ENCODE measurements at regions of chr16 and their contacts with region 1.

Region 1: GRCh38 chr16:70416748-70417616 is 21.9 kb downstream of the ST3GAL2 start:
- DNase-seq: no peak
- H3K4me3 Mint-ChIP-seq: no peak overlapping the region
- H3K27ac Mint-ChIP-seq: no peak overlapping the region
- H3K4me1 Mint-ChIP-seq: no peaks in the 10 kb centered on the region
- H3K27me3 Mint-ChIP-seq: no peaks in the 10 kb centered on the region
- CTCF ChIP-seq: no peak

Region 2: DNA sequence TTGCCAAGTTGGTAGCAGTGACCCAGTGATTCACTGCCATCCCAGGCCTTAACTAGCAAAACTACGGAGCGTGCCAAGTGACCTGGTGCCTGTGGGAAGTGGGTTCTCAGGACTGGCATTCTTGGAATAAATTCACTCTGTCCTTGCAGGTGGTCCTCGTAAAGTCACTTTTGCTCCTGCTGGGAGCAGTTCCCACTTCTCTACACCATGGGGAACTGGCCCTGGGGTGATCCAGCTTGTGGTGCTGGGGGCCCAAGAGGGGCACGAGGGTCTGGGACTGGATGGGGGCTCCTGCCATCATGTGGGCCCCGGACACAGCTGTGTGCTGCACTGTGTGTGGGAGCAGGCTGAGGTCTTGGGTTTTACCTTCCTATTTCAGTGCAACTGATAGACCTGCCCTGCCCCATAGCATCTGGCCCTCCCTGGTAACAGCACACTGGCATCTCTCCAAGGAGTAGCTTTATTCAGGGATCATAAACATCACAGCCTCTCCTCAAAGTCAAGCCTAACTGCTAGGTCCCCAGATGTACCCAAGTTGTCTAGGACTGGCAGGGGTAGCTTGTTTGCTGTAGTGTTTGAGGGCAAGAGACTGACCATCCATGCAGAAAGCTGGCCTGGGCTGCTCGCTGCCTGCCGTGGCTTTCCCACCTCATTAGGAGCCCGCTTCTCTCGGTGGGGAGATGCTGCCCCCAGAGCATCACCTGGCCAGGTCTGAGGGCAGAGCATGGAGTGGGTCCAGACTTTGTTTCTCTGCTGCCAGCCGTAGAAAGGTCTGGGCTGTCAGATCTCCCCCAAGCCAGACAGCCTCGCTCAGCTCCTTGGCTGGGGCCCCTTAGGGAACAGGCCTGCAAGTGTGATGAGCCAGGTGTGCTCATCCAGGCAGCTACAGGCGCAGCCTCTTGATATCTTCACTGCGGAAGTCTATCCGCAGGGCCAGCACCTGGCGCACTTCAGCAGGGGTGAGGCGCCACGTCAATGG is 63.4 kb after region 1 on chr16:
- CTCF ChIA-PET with region 1: interaction called, 11 read pairs
- intact Hi-C with region 1: no loop called
- DNase-seq: no peak
- H3K4me3 Mint-ChIP-seq: no peak overlapping the region
- H3K27ac Mint-ChIP-seq: no peak overlapping the region
- H3K4me1 Mint-ChIP-seq: peaks cover 14% of the 10 kb centered on the region
- H3K27me3 Mint-ChIP-seq: no peaks in the 10 kb centered on the region
- CTCF ChIP-seq: no peak

Region 3: DNA sequence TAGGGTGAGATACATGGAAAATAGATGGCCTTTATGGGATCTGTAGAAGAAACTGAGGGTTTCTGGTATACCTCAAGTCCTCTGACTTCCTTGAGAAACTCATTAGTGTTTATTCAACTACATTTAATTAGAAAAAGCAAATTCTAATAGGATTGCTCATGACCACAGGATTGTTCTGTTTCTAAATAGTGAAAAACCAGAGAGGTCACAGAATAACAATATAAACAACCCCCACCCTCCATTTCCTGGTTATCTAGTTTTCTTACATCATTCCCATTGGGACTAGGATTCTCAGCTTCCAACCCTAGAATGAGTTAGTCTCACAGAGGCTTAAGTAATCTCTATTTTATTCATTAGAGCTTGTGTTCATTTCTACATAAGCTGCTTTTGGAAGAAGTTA is 136.7 kb after region 1 on chr16:
- CTCF ChIA-PET with region 1: no interaction called
- intact Hi-C with region 1: no loop called
- DNase-seq: no peak
- H3K4me3 Mint-ChIP-seq: no peak overlapping the region
- H3K27ac Mint-ChIP-seq: peak overlapping the region; percentile 38
- H3K4me1 Mint-ChIP-seq: peaks cover 12% of the 10 kb centered on the region
- H3K27me3 Mint-ChIP-seq: no peaks in the 10 kb centered on the region
- CTCF ChIP-seq: no peak

Region 4: DNA sequence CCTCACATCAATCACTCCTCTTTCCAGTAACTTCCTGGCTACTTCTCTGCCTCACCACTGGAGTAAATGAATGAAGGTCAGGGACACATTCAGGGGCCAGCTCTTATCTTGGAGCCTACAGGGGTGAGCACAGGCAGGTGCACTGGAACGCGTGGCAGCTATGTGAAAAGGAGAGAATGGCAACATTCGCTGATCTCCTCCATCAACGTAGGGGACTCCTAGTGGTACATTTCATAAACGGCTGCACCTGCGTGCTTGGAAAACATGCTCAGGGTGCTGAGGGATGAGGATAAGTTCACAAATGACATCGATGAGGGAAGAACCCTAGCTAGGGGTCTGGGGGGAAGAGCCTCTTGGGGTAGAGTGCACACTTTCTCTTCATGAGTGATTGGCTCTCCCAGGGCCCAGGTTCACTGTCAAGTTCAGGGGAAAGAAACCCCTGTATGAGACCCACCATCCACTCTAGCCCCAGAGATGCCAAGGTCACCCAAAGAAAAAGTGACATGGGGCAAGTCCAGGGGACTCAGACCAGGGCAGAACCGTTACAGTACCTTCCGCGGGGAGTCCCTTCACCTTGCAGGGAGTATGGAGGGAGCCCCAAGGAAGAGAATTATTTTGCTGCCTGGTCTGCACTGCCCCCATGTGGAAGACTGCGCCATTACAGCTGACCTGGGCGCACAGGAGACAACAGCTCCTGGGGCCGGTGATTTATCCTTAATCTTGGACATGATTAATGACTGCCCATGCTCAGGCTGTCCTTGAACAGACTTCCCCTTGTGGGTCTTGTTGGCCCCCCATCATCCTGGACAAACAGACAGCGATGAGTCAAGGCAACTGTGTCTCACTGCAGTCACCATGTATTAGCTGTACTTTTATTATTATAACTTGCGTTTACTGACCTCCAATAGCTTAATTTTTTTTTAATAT is 353.9 kb after region 1 on chr16:
- CTCF ChIA-PET with region 1: no interaction called
- intact Hi-C with region 1: no loop called
- DNase-seq: peak; percentile 86
- H3K4me3 Mint-ChIP-seq: no peak overlapping the region
- H3K27ac Mint-ChIP-seq: no peak overlapping the region
- H3K4me1 Mint-ChIP-seq: peaks cover 26% of the 10 kb centered on the region
- H3K27me3 Mint-ChIP-seq: no peaks in the 10 kb centered on the region
- CTCF ChIP-seq: peak; percentile 97